Activated T-helper 2 cell treated with anti-CD3 and anti-CD28 coated beads, Interferon-gamma antibody, Interleukin-2, Interleukin-4, amounts not matched to agents 10 μg/mL and 5 μg/mL and 100 μg/mL, durations not matched to agents 14 hours and 24 hours and 36 hours (primary cell): ENCODE measurements at regions of chr3 and their contacts with region 1.

Region 1: GRCh38 chr3:36876181-36876936 is 68.5 kb downstream of the TRANK1 start:
- DNase-seq: peak; percentile 28
- H3K4me3 Mint-ChIP-seq: peak overlapping the region; percentile 48
- H3K27ac Mint-ChIP-seq: peak overlapping the region; percentile 72
- H3K4me1 Mint-ChIP-seq: peaks cover 27% of the 10 kb centered on the region
- H3K27me3 Mint-ChIP-seq: peaks cover 20% of the 10 kb centered on the region

Region 2: GRCh38 chr3:36843065-36844051 is 33.0 kb before region 1 on chr3:
- intact Hi-C with region 1: loop called (anchors 1 kb)
- DNase-seq: peak; percentile 36
- H3K4me3 Mint-ChIP-seq: peak overlapping the region; percentile 6
- H3K27ac Mint-ChIP-seq: no peak overlapping the region
- H3K4me1 Mint-ChIP-seq: peaks cover 30% of the 10 kb centered on the region
- H3K27me3 Mint-ChIP-seq: peaks cover 2% of the 10 kb centered on the region

Region 3: GRCh38 chr3:36900474-36901443 is 24.4 kb after region 1 on chr3:
- intact Hi-C with region 1: loop called (anchors 2 kb)
- DNase-seq: no peak
- H3K4me3 Mint-ChIP-seq: peak overlapping the region; percentile 35
- H3K27ac Mint-ChIP-seq: peak overlapping the region; percentile 5
- H3K4me1 Mint-ChIP-seq: peaks cover 33% of the 10 kb centered on the region
- H3K27me3 Mint-ChIP-seq: peaks cover 3% of the 10 kb centered on the region

Region 4: DNA sequence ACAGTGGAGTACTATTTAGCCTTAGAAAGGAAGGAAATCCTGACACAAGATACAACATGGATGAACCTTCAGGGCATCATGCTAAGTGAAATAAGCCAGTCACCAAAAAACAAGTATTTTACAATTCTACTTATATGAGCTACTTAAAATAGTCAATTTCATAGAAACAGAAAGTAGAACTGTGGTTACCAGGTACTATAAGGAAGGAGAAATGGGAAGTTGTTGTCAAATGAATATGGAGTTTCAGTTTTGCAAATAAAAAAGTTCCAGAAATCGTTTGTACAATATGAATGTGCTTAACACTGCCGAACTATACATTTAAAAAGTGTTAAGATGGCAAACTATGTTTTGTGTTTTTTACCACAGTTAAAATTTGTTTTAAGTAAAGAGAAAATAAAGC is 41.7 kb after region 1 on chr3:
- intact Hi-C with region 1: loop called (anchors 2 kb)
- DNase-seq: no peak
- H3K4me3 Mint-ChIP-seq: peak overlapping the region; percentile 66
- H3K27ac Mint-ChIP-seq: peak overlapping the region; percentile 62
- H3K4me1 Mint-ChIP-seq: peaks cover 27% of the 10 kb centered on the region
- H3K27me3 Mint-ChIP-seq: peaks cover 3% of the 10 kb centered on the region